MCF 10A (cell line): ENCODE measurements at regions of chr1 and their contacts with region 1.

Region 1: DNA sequence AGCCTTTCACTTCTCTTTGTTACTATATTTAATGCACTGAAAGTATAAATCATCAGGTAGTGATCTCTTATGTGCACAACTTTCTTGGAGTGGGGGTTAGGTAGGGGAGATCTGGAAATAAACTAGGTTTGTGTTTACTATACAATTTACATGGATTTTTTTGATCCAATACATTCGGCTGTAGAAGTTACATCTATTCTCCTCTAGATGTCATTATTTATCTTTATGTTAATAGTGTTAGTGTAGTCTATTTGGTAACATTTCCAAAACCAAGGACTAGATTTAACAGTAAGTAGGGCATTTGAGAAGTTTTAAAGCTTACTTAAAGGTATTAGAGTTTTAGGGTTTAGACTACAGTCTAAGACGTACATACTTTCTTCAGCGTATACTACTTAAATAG is 5.4 kb downstream of the VPS45 start:
- DNase-seq: peak; percentile 27
- H3K4me3 Mint-ChIP-seq: no peak overlapping the region
- H3K27ac Mint-ChIP-seq: peak overlapping the region; percentile 7
- H3K4me1 Mint-ChIP-seq: peaks cover 20% of the 10 kb centered on the region
- H3K27me3 Mint-ChIP-seq: no peaks in the 10 kb centered on the region
- CTCF ChIP-seq: peak; percentile 61

Region 2: DNA sequence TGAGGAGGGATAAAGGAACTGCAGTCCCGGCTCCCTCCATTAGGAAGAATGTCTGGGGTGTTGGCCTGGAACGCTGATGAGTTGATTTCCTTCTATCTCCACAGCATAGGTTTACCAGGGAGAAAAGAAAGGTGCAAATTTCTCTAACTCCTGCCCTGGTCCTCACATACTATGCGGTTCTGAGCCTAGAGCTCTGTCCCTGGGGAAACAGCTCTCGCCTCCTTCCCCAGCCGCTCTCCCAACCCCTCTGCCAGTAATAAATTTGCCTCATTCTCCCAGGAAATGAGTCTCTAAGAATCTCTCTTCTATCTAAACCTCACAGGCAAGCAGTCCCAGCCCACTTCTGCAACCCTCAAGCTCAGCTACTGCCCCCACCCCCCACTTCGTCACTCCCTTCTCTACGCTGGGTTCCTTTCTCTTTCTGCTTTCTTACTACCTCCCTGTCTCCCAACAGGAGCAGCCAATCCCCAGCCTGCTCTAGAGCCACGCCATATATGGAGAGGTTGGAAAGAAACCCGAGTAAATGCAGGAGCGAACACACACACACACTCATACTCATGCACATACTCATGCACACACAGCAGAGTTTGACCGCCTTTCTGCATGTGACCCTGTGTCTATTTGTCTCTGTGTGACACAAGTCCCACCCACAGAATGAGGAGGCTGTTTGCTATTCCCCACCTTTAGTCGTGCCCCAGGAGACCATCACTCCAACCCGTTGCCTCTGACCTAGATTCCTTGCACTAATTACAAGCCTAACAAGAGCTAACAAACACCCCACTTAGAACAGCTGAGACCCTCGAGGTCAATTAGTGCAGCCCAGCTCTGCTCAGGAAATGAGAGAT is 90.1 kb after region 1 on chr1:
- CTCF ChIA-PET with region 1: interaction called, 90 read pairs
- POLR2A ChIA-PET with region 1: interaction called, 10 read pairs
- intact Hi-C with region 1: no loop called
- DNase-seq: peak; percentile 97
- H3K4me3 Mint-ChIP-seq: peak overlapping the region; percentile 69
- H3K27ac Mint-ChIP-seq: peak overlapping the region; percentile 84
- H3K4me1 Mint-ChIP-seq: peaks cover 14% of the 10 kb centered on the region
- H3K27me3 Mint-ChIP-seq: no peaks in the 10 kb centered on the region
- CTCF ChIP-seq: peak; percentile 25

Region 3: DNA sequence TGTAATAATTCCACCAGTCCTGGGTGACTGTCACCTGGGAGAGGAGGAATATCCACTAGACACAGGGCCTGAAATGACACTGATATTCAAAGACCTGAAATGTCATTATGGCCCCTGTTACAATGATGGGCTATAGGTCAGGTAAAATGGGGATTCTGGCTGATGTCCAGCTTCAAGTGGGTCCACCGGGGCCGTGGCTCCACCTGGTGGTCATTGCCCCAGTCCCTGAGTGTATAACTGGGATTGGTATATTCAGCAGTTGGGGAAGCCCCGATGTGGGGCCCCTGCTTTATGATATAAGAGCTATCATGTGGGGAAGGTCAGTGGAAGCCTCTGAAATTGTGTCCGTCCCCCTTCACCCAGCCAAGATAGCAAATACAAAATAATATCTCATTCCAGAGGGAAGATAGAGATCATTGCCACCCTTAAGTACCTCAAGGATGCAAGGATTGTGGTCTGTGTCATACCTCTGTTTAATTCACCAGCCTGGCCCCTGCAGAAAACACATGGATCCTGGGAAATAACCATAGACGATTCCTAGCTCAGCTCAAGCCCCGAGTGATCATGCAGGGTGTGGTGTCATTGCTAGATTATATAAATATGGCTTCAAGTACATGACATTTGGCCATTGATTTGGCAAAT is 96.1 kb after region 1 on chr1:
- CTCF ChIA-PET with region 1: interaction called, 90 read pairs
- POLR2A ChIA-PET with region 1: interaction called, 6 read pairs
- intact Hi-C with region 1: loop called (anchors 1 kb)
- DNase-seq: peak; percentile 82
- H3K4me3 Mint-ChIP-seq: no peak overlapping the region
- H3K27ac Mint-ChIP-seq: no peak overlapping the region
- H3K4me1 Mint-ChIP-seq: no peaks in the 10 kb centered on the region
- H3K27me3 Mint-ChIP-seq: no peaks in the 10 kb centered on the region
- CTCF ChIP-seq: peak; percentile 88

Region 4: GRCh38 chr1:150176593-150176992 is 103.6 kb after region 1 on chr1:
- CTCF ChIA-PET with region 1: interaction called, 27 read pairs
- POLR2A ChIA-PET with region 1: interaction called, 3 read pairs
- intact Hi-C with region 1: no loop called
- DNase-seq: peak; percentile 66
- H3K4me3 Mint-ChIP-seq: no peak overlapping the region
- H3K27ac Mint-ChIP-seq: no peak overlapping the region
- H3K4me1 Mint-ChIP-seq: no peaks in the 10 kb centered on the region
- H3K27me3 Mint-ChIP-seq: no peaks in the 10 kb centered on the region
- CTCF ChIP-seq: no peak